ENCODE measurements at regions of chr11 and their contacts with region 1.

Region 1: GRCh38 chr11:119144825-119145486 is 3.9 kb upstream of the ABCG4 start:
- DNase-seq: peak; percentile 78
- ATAC-seq: peak; percentile 90
- H3K4me3 ChIP-seq: peak overlapping the region; percentile 15 to 28; a peak in 2 of 4 replicates
- H3K27ac ChIP-seq: no peak overlapping the region
- H3K4me1 ChIP-seq: peaks cover 8 to 35% of the 10 kb centered on the region in 2 experiments; a peak in 3 of 4 replicates
- H3K27me3 ChIP-seq: no peaks in the 10 kb centered on the region
- CTCF ChIP-seq: peak; percentile 57 to 73 (median 58); a peak in 5 of 6 replicates
- POLR2A ChIP-seq: peak; percentile 13
- RAD21 ChIP-seq: peak; percentile 55

Region 2: DNA sequence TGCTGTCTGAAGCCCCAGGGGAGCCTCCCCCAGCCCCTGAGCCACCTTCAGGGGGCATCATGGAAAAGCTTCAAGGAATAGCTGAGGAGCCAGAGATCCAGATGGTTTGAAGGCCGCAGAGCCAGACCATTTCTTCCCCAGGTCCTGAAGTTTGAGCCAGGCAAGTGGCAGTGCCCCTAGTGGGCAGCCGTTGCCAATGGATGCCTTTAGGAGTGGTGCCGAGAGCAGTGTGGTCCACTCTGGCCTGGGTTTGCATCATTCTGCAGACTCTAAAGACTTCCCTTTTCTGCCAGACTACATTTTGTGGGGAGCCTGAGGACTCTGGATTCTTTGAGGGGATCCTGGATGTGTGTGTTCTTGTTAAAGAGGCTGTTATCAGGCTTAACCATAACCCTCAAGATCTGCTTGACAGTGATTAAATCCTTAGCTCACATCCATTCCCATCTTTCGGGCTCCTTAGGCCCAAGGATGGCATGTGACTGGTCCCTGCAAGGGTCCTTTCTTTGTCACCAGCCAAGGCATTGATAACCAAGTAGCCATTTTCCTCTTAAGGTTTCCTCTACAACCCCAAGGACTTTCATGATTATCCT is 10.5 kb before region 1 on chr11:
- CTCF ChIA-PET with region 1: interaction called, 15 read pairs
- POLR2A ChIA-PET with region 1: interaction called, 4 read pairs
- RAD21 ChIA-PET with region 1: no interaction called
- intact Hi-C with region 1: no loop called
- DNase-seq: no peak
- ATAC-seq: peak; percentile 89
- H3K4me3 ChIP-seq: no peak overlapping the region
- H3K27ac ChIP-seq: peak overlapping the region; percentile 8; the same call in 1 of the 2 replicates
- H3K4me1 ChIP-seq: no peaks in the 10 kb centered on the region
- H3K27me3 ChIP-seq: no peaks in the 10 kb centered on the region
- CTCF ChIP-seq: peak; percentile 7 to 86 (median 76); a peak in 4 of 6 replicates
- POLR2A ChIP-seq: no peak
- RAD21 ChIP-seq: peak; percentile 26

Region 3: DNA sequence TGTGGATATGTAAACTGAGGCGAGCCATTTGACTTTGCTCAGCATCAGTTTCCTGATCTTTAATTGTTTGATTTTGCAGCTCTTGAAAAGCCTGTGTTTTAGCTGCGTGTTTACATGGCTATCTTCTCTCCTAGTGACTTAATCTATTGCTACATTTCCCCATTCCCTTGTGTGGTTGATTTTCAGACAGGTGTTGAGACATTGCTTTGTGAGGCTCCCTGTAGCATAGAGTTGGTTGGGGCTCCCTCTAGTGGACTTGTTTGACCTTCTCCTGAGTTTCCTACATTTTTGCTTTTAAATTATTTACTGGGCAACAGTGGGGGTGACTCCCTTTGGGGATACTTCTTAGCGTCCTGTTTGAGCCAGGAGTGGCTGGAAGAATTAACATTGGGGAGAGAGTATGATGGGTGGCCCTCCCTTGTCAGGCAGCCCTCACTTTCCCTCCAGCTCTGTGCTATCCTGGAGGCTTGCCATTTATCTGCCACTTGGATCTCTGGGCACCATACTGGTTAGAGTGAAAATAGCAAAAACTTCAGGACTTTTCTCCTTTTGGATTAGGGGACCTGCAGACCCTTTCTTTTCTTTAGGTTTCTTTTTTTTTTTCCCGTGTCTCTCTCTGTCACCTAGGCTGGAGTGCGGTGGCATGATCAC is 52.0 kb after region 1 on chr11:
- CTCF ChIA-PET with region 1: interaction called, 5 read pairs
- POLR2A ChIA-PET with region 1: no interaction called
- RAD21 ChIA-PET with region 1: no interaction called
- intact Hi-C with region 1: loop called (anchors 2 kb)
- DNase-seq: peak; percentile 76
- ATAC-seq: peak; percentile 86
- H3K4me3 ChIP-seq: no peak overlapping the region
- H3K27ac ChIP-seq: no peak overlapping the region
- H3K4me1 ChIP-seq: peaks cover 8 to 17% of the 10 kb centered on the region in 2 experiments; a peak in 2 of 4 replicates
- H3K27me3 ChIP-seq: no peaks in the 10 kb centered on the region
- CTCF ChIP-seq: peak; percentile 74 to 93 (median 87); a peak in 5 of 6 replicates
- POLR2A ChIP-seq: no peak
- RAD21 ChIP-seq: peak; percentile 94

Region 4: GRCh38 chr11:119474682-119475596 is 330.0 kb after region 1 on chr11:
- CTCF ChIA-PET with region 1: interaction called, 3 read pairs
- POLR2A ChIA-PET with region 1: no interaction called
- RAD21 ChIA-PET with region 1: no interaction called
- intact Hi-C with region 1: loop called (anchors 5 kb)
- DNase-seq: no peak
- ATAC-seq: peak; percentile 78
- H3K4me3 ChIP-seq: no peak overlapping the region
- H3K27ac ChIP-seq: no peak overlapping the region
- H3K4me1 ChIP-seq: peaks cover 0 to 25% of the 10 kb centered on the region in 2 experiments; a peak in 1 of 4 replicates
- H3K27me3 ChIP-seq: no peaks in the 10 kb centered on the region
- CTCF ChIP-seq: peak; percentile 80 to 91 (median 88)
- POLR2A ChIP-seq: no peak
- RAD21 ChIP-seq: peak; percentile 90

Measured in HCT116 (cell line).